ENCODE measurements at regions of chr15 and their contacts with region 1.

Region 1: GRCh38 chr15:76139368-76140073 is 79.7 kb downstream of the TMEM266 start:
- ATAC-seq: peak; percentile 63 to 97 (median 78)
- H3K4me3 ChIP-seq: no peak overlapping the region
- H3K27ac ChIP-seq: no peak overlapping the region
- H3K4me1 ChIP-seq: peaks cover 0 to 6% of the 10 kb centered on the region in 2 donors

Region 2: DNA sequence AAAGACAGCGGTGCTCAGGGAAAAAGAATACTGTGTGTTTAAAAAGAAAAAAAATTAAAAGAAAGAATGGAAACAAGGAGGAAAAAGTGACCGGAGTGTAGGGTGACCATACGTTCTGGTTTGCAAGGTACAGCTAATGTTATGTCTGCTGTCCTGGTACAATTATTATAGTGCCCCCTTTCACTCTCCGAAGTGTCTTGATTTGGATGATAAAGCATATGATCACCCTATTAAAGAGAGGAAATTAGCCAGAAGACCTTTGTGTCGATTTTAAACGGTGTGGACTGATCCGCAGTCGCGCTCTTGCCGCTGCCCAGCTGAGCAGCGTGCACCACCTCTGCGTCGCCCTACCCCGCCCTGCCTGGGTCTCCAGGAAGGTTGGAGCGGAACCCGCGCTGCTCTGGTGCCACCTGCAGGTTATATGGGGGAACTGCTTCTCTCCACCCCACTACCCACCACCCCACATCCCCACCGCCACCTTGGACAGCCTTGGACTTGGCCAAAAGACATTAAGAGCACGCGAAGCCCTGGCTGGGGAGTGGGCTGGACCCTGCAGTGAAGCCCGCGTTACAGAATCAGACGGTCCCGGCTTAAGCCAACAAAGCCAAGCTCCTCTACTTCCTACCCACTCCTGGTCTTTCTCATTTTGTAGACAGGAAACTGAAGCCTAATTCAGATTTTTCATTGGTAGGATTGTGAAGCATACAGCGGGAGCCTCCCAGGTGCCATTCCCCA is 337.5 kb before region 1 on chr15:
- in situ Hi-C with region 1: loop called in 1 of 9 experiments (anchors 25 kb)
- ATAC-seq: peak; percentile 99 to 100 (median 99)
- H3K4me3 ChIP-seq: peak overlapping the region in 2 of 5 donors; percentile 0 to 7
- H3K27ac ChIP-seq: no peak overlapping the region
- H3K4me1 ChIP-seq: no peaks in the 10 kb centered on the region

Region 3: GRCh38 chr15:76038512-76038911 is 101.0 kb before region 1 on chr15:
- in situ Hi-C with region 1: no loop called
- ATAC-seq: no peak
- H3K4me3 ChIP-seq: no peak overlapping the region
- H3K27ac ChIP-seq: no peak overlapping the region
- H3K4me1 ChIP-seq: no peaks in the 10 kb centered on the region

Region 4: DNA sequence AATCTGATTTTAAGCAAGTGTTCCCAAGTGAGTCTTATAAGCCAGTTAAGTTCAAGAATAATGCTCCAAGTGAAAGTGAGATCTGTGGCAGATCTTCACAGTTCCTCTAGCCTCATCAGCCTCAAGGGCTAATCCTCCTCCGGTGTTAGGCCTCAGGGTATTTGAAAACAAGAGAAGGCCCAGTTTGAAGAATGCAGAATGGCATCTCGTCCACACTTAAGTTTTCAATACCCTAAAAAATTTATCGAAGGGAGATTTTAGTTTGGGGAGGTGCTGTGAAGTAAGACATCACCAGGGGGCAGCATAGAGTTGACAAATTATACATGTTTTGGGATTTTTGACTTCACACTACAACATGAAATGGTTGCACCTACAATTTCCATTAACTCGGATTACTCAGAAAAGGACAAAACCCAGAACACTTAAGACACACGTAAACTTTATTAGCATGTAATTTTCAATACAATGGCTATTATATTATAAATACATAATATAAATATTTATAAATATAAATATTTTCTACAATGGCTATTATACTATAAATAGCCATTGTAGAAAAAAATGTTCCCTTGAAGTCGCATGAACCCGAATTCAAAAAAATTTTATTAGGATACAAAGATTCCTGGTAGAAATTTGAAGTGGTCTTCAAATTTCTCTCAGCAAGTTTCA is 82.1 kb before region 1 on chr15:
- in situ Hi-C with region 1: loop called in 1 of 9 experiments (anchors 10 kb)
- ATAC-seq: peak in 1 of 8 experiments; percentile 10
- H3K4me3 ChIP-seq: no peak overlapping the region
- H3K27ac ChIP-seq: no peak overlapping the region
- H3K4me1 ChIP-seq: peaks cover 0 to 9% of the 10 kb centered on the region in 2 donors

Region 5: GRCh38 chr15:76336254-76337058 is 196.9 kb after region 1 on chr15 and contains the start of gene ISL2:
- in situ Hi-C with region 1: no loop called
- ATAC-seq: peak; percentile 62 to 87 (median 84)
- H3K4me3 ChIP-seq: peak within 1 kb of the TSS; percentile 25 to 81 (median 33)
- H3K27ac ChIP-seq: peak within 1 kb of the TSS; percentile 18 to 74
- H3K4me1 ChIP-seq: peaks cover 20 to 33% of the 10 kb centered on the region in 2 donors
- total RNA-seq, gene ISL2: 0.49 to 11.1 (median 1.6) TPM

Measured in motor neuron (in vitro differentiated cells).